Activated CD4-positive, alpha-beta memory T cell treated with anti-CD3 and anti-CD28 coated beads, Interleukin-2, amount 10 ng/mL, durations not matched to agents 7 days and 5 days (primary cell): ENCODE measurements at regions of chr11 and their contacts with region 1.

Region 1: GRCh38 chr11:67401495-67402191 is at the start of gene PPP1CA:
- DNase-seq: peak; percentile 93
- H3K4me3 Mint-ChIP-seq: peak within 1 kb of the TSS; percentile 87
- H3K27ac Mint-ChIP-seq: peak within 1 kb of the TSS; percentile 99
- H3K4me1 Mint-ChIP-seq: peaks cover 68% of the 10 kb centered on the region
- H3K27me3 Mint-ChIP-seq: no peaks in the 10 kb centered on the region
- total RNA-seq, gene PPP1CA: 308 to 315 TPM

Region 2: GRCh38 chr11:67073908-67074307 is 327.7 kb before region 1 on chr11:
- CTCF ChIA-PET with region 1: no interaction called
- POLR2A ChIA-PET with region 1: no interaction called
- DNase-seq: no peak
- H3K4me3 Mint-ChIP-seq: no peak overlapping the region
- H3K27ac Mint-ChIP-seq: no peak overlapping the region
- H3K4me1 Mint-ChIP-seq: peaks cover 11% of the 10 kb centered on the region
- H3K27me3 Mint-ChIP-seq: peaks cover 10% of the 10 kb centered on the region

Region 3: GRCh38 chr11:67288452-67289225 is 113.0 kb before region 1 on chr11:
- CTCF ChIA-PET with region 1: no interaction called
- POLR2A ChIA-PET with region 1: interaction called, 10 read pairs
- DNase-seq: peak; percentile 94
- H3K4me3 Mint-ChIP-seq: peak overlapping the region; percentile 74
- H3K27ac Mint-ChIP-seq: peak overlapping the region; percentile 99
- H3K4me1 Mint-ChIP-seq: peaks cover 76% of the 10 kb centered on the region
- H3K27me3 Mint-ChIP-seq: no peaks in the 10 kb centered on the region

Region 4: DNA sequence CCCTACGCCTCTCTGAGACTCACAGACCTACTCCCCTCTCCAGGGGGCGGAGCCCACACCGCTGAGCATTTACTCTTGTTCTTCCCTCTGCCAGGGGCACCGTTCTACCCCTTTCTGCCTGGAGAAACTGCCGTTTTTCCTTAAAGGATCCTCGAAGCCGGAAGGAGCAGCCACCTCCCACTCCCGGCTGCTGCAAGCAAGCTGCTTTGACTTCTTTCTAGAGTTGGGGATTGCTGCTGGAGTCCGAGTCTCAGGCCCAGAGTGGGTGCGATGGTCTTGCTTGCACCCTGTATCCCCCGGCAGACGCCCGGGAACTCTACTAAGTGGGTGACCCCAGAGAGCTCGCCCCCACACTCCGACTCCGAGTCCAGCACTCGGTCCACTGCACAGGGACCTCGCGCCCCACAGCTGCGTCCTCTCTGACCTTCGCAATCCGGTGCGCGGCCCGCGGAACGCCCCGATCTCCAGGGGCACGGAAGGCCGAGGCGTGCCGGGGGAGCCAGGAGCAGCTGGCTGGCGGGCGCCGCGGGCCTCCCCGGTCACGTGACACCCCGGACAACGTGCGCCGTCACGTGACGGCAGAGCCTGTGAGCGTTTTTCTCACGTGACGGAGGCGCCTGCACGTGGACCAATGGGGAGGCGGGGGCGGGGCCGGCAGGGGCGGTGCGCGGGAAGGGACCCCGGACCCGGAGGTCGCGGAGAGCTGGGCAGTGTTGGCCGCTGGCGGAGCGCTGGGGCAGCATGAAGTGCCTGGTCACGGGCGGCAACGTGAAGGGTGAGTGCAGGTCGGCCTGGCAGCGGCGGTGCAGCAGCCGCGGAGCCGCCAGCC is 10.1 kb before region 1 on chr11 and contains the start of gene RAD9A:
- CTCF ChIA-PET with region 1: interaction called, 24 read pairs
- POLR2A ChIA-PET with region 1: interaction called, 97 read pairs
- DNase-seq: peak; percentile 95
- H3K4me3 Mint-ChIP-seq: peak within 1 kb of the TSS; percentile 94
- H3K27ac Mint-ChIP-seq: peak within 1 kb of the TSS; percentile 81
- H3K4me1 Mint-ChIP-seq: peaks cover 44% of the 10 kb centered on the region
- H3K27me3 Mint-ChIP-seq: no peaks in the 10 kb centered on the region
- total RNA-seq, gene RAD9A: 48.0 to 53.9 TPM

Region 5: GRCh38 chr11:67428052-67428914 is 26.6 kb after region 1 on chr11 and contains the start of gene RPS6KB2:
- CTCF ChIA-PET with region 1: interaction called, 9 read pairs
- POLR2A ChIA-PET with region 1: interaction called, 361 read pairs
- DNase-seq: peak; percentile 100
- H3K4me3 Mint-ChIP-seq: peak within 1 kb of the TSS; percentile 95
- H3K27ac Mint-ChIP-seq: peak within 1 kb of the TSS; percentile 94
- H3K4me1 Mint-ChIP-seq: peaks cover 59% of the 10 kb centered on the region
- H3K27me3 Mint-ChIP-seq: no peaks in the 10 kb centered on the region
- total RNA-seq, gene RPS6KB2: 56.9 to 57.1 TPM

Region 6: DNA sequence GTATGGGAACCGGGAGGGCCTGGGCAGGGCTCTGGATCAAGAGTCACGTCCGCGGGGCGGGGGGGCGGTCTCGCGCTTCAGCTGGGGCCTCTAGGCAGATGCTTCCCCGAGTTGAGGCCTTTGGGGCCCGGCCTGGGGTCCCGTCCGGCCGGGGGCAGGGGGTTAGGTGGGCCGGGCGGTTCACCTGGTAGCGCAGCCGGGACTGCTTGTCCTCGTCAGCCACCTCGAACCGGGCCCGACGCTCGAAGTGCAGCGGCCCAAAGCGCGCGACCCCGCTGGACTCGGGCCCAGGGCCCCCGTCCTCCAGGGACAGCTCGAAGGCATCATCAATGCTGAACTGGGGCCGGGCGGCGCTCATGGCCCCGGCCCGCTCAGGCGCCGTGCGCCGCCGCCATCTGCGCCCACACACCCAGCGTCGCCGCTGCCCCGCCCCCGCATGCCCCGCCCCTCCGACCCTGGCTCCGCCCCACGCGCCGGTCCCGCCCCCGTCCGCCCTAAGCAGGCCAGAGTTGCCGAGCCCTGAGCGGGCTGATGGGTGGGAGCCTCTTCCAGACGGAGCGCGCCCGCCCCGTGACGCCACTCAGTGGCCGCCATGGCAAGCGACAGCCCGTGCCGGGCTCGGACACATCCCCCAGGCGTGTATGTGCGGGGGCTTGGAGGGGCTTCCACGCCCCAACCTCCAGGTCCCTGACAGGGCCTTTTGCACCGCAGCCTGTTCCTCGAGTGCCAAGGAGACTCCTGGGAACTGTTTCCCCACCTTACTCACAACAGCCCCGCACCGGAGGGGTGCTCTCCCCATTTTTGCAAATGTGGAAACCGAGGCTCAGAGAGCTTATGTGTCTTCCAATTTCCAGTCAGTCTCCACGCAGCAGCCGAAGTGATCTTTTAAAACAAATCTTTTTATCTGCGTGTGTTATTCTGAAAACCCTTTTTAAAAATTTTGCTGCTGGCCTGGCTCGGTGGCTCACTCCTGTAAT is 67.5 kb after region 1 on chr11 and contains the start of gene TMEM134:
- CTCF ChIA-PET with region 1: interaction called, 6 read pairs
- POLR2A ChIA-PET with region 1: interaction called, 49 read pairs
- DNase-seq: peak; percentile 93
- H3K4me3 Mint-ChIP-seq: peak within 1 kb of the TSS; percentile 86
- H3K27ac Mint-ChIP-seq: peak within 1 kb of the TSS; percentile 75
- H3K4me1 Mint-ChIP-seq: peaks cover 40% of the 10 kb centered on the region
- H3K27me3 Mint-ChIP-seq: no peaks in the 10 kb centered on the region
- total RNA-seq, gene TMEM134: 36.3 to 37.6 TPM

Region 7: GRCh38 chr11:67507864-67508485 is 106.3 kb after region 1 on chr11 and contains the start of gene CDK2AP2:
- CTCF ChIA-PET with region 1: interaction called, 15 read pairs
- POLR2A ChIA-PET with region 1: interaction called, 12 read pairs
- DNase-seq: peak; percentile 99
- H3K4me3 Mint-ChIP-seq: peak within 1 kb of the TSS; percentile 93
- H3K27ac Mint-ChIP-seq: peak within 1 kb of the TSS; percentile 90
- H3K4me1 Mint-ChIP-seq: peaks cover 41% of the 10 kb centered on the region
- H3K27me3 Mint-ChIP-seq: peaks cover 8% of the 10 kb centered on the region
- total RNA-seq, gene CDK2AP2: 116 to 119 TPM